ENCODE measurements at regions of chr11 and their contacts with region 1.

Region 1: DNA sequence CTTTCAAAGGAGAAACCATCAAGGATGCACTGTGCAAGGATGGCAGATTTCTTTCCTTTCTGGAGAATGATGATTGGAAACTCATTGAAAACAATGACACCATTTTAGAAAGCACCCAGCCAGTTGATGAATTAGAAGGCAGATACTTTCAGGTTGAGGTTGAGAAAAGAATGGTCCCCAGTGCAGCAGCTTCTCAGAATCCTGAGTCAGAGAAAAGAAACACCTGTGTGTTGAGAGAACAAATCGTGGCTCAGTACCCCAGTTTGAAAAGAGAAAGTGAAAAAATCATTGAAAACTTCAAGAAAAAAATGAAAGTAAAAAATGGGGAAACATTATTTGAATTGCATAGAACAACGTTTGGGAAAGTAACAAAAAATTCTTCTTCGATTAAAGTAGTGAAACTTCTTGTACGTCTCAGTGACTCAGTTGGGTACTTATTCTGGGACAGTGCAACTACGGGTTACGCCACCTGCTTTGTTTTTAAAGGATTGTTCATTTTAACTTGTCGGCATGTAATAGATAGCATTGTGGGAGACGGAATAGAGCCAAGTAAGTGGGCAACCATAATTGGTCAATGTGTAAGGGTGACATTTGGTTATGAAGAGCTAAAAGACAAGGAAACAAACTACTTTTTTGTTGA is 9.8 kb downstream of the FAM111A start:
- DNase-seq: peak; percentile 71
- H3K4me3 Mint-ChIP-seq: peak overlapping the region; percentile 53
- H3K27ac Mint-ChIP-seq: peak overlapping the region; percentile 91
- H3K4me1 Mint-ChIP-seq: peaks cover 38% of the 10 kb centered on the region
- H3K27me3 Mint-ChIP-seq: no peaks in the 10 kb centered on the region

Region 2: DNA sequence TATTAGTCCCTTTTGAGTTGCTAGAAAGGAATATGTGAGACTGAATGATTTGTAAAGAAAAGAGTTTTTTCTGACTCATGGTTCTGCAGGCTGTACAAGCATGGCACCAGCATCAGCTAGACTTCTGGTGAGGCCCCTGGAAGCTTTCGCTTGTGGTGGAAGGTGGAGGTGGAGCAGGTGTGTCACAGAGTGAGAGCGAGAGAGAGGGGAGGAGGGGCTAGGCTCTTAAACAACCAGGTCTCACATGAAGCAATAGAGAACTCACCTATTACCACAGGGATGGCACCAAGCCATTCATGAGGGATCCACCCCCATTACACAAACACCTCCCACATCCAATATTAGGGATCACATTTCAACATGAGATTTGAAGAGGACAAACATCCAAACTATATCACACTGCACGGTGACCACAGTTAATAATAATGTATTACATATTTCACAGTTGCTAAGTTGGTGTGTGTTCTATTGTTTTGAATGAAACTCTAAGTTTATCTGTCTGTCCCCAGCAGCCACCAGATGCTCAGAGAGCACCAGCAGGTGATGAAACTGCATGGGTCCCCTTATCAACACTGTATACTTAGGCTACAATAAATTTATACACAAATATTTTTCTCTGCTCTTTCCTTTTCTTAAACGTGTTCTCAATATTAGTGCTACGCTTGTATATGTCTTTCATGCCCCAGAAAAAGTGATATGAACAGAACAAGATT is 559.5 kb before region 1 on chr11:
- CTCF ChIA-PET with region 1: no interaction called
- intact Hi-C with region 1: loop called (anchors 1 kb)
- DNase-seq: peak; percentile 71
- H3K4me3 Mint-ChIP-seq: no peak overlapping the region
- H3K27ac Mint-ChIP-seq: peak overlapping the region; percentile 67
- H3K4me1 Mint-ChIP-seq: peaks cover 73% of the 10 kb centered on the region
- H3K27me3 Mint-ChIP-seq: no peaks in the 10 kb centered on the region

Region 3: GRCh38 chr11:59186130-59186594 is 33.7 kb after region 1 on chr11:
- CTCF ChIA-PET with region 1: interaction called, 10 read pairs
- intact Hi-C with region 1: no loop called
- DNase-seq: peak; percentile 60
- H3K4me3 Mint-ChIP-seq: no peak overlapping the region
- H3K27ac Mint-ChIP-seq: no peak overlapping the region
- H3K4me1 Mint-ChIP-seq: no peaks in the 10 kb centered on the region
- H3K27me3 Mint-ChIP-seq: no peaks in the 10 kb centered on the region

Region 4: GRCh38 chr11:59197991-59198390 is 45.6 kb after region 1 on chr11:
- CTCF ChIA-PET with region 1: interaction called, 6 read pairs
- intact Hi-C with region 1: loop called (anchors 1 kb)
- DNase-seq: no peak
- H3K4me3 Mint-ChIP-seq: no peak overlapping the region
- H3K27ac Mint-ChIP-seq: no peak overlapping the region
- H3K4me1 Mint-ChIP-seq: peaks cover 15% of the 10 kb centered on the region
- H3K27me3 Mint-ChIP-seq: peaks cover 17% of the 10 kb centered on the region

Region 5: DNA sequence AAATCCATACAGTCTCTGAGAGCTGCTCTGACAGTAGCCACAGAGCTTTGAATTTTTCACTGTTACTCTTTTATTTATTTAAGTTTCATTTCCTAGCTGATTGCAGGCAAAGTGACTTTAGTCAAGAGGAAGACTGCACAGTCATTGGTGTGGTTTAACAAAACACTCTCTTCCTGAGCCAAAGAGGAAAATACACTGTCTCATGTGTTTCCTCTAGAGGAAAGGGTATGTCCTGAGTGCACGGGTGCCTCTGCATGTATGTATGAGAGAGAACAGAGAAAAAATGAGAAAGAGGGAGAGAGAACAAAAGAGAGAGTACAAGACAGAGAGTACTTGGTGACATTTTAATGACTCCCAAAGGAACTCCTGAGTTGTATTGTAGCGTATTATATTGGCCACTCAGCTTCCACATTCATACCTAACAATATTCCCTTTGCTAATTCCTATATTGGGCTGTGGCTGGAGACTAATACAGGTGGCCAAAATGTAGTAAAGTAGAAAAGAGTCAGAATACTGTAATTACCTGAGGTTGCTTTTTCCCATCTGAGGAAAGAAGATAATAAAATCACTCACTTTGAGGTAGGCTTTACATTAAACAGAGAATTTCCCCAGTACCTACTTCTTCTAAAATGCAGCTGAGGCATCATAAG is 358.6 kb after region 1 on chr11 and contains the start of gene OR4D9:
- CTCF ChIA-PET with region 1: no interaction called
- intact Hi-C with region 1: no loop called
- DNase-seq: peak; percentile 29
- H3K4me3 Mint-ChIP-seq: no peak within 1 kb of the TSS
- H3K27ac Mint-ChIP-seq: no peak within 1 kb of the TSS
- H3K4me1 Mint-ChIP-seq: peaks cover 27% of the 10 kb centered on the region
- H3K27me3 Mint-ChIP-seq: no peaks in the 10 kb centered on the region
- total RNA-seq, gene OR4D9: not detected

Region 6: DNA sequence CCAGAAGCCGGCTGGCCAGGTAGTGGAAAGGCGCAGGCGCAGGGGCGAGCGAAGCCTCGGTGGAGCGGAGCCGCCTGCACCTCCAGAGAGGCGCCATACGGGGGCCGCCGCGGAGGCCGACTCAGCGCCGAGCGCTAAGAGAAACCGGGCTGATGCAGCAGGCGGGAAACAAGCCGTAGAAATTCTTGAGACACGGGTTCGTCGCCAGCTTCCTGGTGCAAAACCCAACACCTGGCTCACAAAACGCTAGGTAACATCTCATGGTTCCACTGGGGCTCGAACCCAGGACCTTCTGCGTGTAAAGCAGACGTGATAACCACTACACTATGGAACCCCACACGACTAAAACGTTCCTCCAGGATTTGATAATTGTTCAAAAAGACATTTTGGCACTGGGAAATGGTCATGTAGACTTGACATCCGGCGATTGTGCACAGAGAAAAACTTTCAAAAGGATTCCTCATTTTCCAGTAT is 398.0 kb after region 1 on chr11:
- CTCF ChIA-PET with region 1: no interaction called
- intact Hi-C with region 1: loop called (anchors 2 kb)
- DNase-seq: peak; percentile 93
- H3K4me3 Mint-ChIP-seq: peak overlapping the region; percentile 79
- H3K27ac Mint-ChIP-seq: peak overlapping the region; percentile 93
- H3K4me1 Mint-ChIP-seq: peaks cover 27% of the 10 kb centered on the region
- H3K27me3 Mint-ChIP-seq: peaks cover 5% of the 10 kb centered on the region

Measured in activated naive CD4-positive, alpha-beta T cell treated with anti-CD3 and anti-CD28 coated beads for 36 hours (primary cell).